Ascending aorta (tissue), 2 donors: ENCODE measurements at regions of chr2 and their contacts with region 1.

Region 1: GRCh38 chr2:45275242-45275805 is 266.1 kb upstream of the SIX2 start:
- DNase-seq: no peak
- H3K4me3 ChIP-seq: no peak overlapping the region
- H3K27ac ChIP-seq: peak overlapping the region; percentile 73 to 80
- H3K4me1 ChIP-seq: peaks cover 9 to 34% of the 10 kb centered on the region in 2 donors
- H3K27me3 ChIP-seq: no peaks in the 10 kb centered on the region
- CTCF ChIP-seq: no peak

Region 2: GRCh38 chr2:44894058-44894457 is 381.3 kb before region 1 on chr2:
- intact Hi-C with region 1: no loop called
- DNase-seq: no peak
- H3K4me3 ChIP-seq: no peak overlapping the region
- H3K27ac ChIP-seq: no peak overlapping the region
- H3K4me1 ChIP-seq: no peaks in the 10 kb centered on the region
- H3K27me3 ChIP-seq: no peaks in the 10 kb centered on the region
- CTCF ChIP-seq: no peak

Region 3: GRCh38 chr2:45242161-45242741 is 33.1 kb before region 1 on chr2:
- intact Hi-C with region 1: loop called (anchors 2 kb)
- DNase-seq: peak in 1 of 2 donors; percentile 75
- H3K4me3 ChIP-seq: no peak overlapping the region
- H3K27ac ChIP-seq: peak overlapping the region; percentile 70 to 77
- H3K4me1 ChIP-seq: peaks cover 7 to 16% of the 10 kb centered on the region in 2 donors
- H3K27me3 ChIP-seq: no peaks in the 10 kb centered on the region
- CTCF ChIP-seq: no peak

Region 4: GRCh38 chr2:45256867-45257641 is 18.3 kb before region 1 on chr2:
- intact Hi-C with region 1: loop called (anchors 2 kb)
- DNase-seq: no peak
- H3K4me3 ChIP-seq: no peak overlapping the region
- H3K27ac ChIP-seq: peak overlapping the region; percentile 81 to 87
- H3K4me1 ChIP-seq: peaks cover 3 to 45% of the 10 kb centered on the region in 2 donors
- H3K27me3 ChIP-seq: no peaks in the 10 kb centered on the region
- CTCF ChIP-seq: no peak

Region 5: DNA sequence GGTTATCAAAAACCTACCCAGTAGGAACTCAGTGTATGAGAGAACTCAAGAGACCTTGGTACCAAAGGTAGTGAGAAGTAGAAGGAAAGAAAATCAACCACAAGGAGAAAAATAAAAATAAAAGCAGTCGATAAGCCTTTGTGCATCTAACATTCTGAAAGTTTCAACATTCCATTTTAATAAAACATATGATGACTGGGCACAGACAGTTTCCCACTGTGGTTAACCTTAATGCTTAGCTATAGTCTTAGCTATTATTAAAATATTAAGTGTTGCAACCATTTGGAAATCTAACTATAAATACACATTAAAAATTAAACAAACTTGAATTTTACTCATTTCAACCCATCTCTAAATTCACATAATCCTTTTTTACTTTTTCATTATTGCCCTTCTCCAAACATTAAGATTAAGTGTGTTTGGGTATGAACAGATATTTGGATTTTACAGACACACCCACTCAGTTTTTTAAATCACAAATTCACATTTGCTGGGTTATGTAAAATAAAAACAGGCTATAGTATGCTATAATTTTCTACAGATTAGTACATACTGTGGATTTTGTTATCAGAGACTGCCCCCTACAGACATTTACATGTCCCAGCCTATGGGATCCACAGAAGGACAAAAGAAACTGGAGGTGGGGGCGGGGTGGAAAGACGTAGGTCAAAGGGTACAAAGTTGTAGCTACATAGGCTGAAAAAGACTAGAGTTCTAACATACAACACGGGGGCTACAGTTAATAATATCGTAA is 302.9 kb after region 1 on chr2:
- intact Hi-C with region 1: no loop called
- DNase-seq: no peak
- H3K4me3 ChIP-seq: no peak overlapping the region
- H3K27ac ChIP-seq: no peak overlapping the region
- H3K4me1 ChIP-seq: no peaks in the 10 kb centered on the region
- H3K27me3 ChIP-seq: no peaks in the 10 kb centered on the region
- CTCF ChIP-seq: peak in 1 of 3 experiments; percentile 13

Region 6: DNA sequence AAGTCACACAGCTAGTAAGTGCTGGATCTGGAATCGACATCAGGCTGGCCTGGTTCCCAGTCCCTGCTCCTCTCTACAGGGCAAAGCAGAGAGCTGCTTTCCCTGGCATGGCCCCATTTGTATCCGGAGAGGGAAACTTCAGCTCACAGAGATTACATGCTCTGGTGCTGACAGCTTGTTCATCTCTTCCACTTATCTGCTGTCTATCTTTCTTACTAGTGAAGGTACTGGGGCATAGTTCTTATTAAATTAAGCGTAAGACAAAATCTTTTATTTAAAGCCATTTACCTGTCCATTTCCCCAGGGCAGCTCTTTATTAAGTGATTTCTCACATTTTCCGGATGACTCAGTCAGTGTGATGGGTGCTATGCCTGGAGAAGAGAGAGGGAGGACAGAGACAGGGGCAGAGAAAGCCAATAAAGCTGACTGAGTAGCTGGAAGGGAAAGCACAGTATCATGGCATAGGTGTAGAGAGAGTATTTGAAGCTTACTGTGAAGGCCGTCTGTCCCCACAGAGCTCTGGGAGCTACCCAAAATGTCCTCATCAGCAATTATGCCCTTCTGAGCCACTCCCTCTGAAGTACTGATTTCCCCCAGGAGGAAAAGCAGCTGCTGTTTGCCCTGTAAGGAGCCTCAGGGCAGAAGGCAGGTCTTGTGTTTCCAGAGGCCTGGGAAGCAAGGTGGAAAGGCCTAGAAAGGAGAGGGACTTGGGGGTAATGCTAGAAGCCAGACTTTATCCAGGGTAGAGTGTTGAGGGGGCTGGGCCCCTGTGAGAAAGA is 977.8 kb after region 1 on chr2:
- intact Hi-C with region 1: no loop called
- DNase-seq: no peak
- H3K4me3 ChIP-seq: no peak overlapping the region
- H3K27ac ChIP-seq: no peak overlapping the region
- H3K4me1 ChIP-seq: no peaks in the 10 kb centered on the region
- H3K27me3 ChIP-seq: no peaks in the 10 kb centered on the region
- CTCF ChIP-seq: no peak